Sciatic nerve (tissue), 2 donors: ENCODE measurements at regions of chr11 and their contacts with region 1.

Region 1: GRCh38 chr11:8813658-8814057 is 97.3 kb upstream of the AKIP1 start:
- DNase-seq: peak; percentile 81
- ATAC-seq: peak; percentile 49

Region 2: GRCh38 chr11:8709002-8709672 is 104.5 kb before region 1 on chr11:
- intact Hi-C with region 1: no loop called
- DNase-seq: peak; percentile 95
- ATAC-seq: peak; percentile 94

Region 3: GRCh38 chr11:8722101-8722500 is 91.6 kb before region 1 on chr11:
- intact Hi-C with region 1: loop called (anchors 10 kb)
- DNase-seq: no peak
- ATAC-seq: no peak